Psoas muscle (tissue), 8 donors: ENCODE measurements at regions of chr10 and their contacts with region 1.

Region 1: DNA sequence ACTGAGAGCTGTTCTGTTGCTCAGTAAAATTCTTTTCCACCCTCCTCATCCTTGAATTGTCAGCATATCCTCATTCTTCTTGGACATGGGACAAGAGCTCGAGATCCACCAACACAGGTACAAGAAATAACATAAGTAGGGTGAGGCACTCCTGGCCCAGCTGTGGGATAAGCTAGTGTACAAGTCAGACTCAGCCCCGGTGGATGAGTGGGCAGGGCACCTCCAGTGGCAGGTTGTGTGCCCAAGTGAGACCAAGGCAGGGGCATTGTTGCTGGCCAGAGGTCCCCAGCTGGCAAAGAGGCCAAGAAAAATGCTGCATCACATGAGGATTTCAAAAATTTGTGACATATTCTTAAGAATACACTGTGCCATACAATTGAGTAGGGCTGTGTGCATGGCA is 402.0 kb upstream of the ZWINT start:
- DNase-seq: no peak
- ATAC-seq: no peak
- H3K4me3 ChIP-seq: no peak overlapping the region
- H3K27ac ChIP-seq: no peak overlapping the region
- H3K4me1 ChIP-seq: no peaks in the 10 kb centered on the region
- H3K27me3 ChIP-seq: no peaks in the 10 kb centered on the region
- CTCF ChIP-seq: no peak

Region 2: DNA sequence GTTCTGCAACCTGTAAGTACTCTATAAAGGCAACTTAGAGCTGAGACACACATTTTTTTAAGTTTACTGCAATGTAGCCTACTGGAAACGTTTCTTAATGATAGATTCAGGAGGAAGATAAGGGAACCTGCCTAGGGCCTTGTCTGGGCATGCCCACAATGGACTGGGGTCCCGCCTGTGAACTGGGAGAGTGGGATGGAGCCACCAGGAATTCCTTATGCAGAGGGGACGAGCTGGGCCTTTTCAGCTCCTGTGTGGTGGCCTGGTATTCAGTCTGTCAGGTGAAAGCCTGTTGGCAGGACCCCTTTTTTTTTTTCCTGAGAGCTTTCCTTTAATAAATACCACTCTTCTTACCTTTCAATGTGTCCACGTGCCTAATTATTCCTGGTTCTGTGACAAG is 17.6 kb before region 1 on chr10:
- intact Hi-C with region 1: loop called in 1 of 2 experiments (anchors 1 kb)
- DNase-seq: no peak
- ATAC-seq: no peak
- H3K4me3 ChIP-seq: no peak overlapping the region
- H3K27ac ChIP-seq: no peak overlapping the region
- H3K4me1 ChIP-seq: no peaks in the 10 kb centered on the region
- H3K27me3 ChIP-seq: no peaks in the 10 kb centered on the region
- CTCF ChIP-seq: no peak